Colonic mucosa (tissue), 4 donors: ENCODE measurements at regions of chr3 and their contacts with region 1.

Region 1: GRCh38 chr3:18761530-18761929 is 336.4 kb upstream of the SATB1 start:
- DNase-seq: no peak
- H3K4me3 ChIP-seq: no peak overlapping the region
- H3K27ac ChIP-seq: no peak overlapping the region
- H3K4me1 ChIP-seq: peaks cover 5% of the 10 kb centered on the region
- H3K27me3 ChIP-seq: no peaks in the 10 kb centered on the region
- CTCF ChIP-seq: no peak

Region 2: GRCh38 chr3:18559331-18559842 is 202.1 kb before region 1 on chr3:
- intact Hi-C with region 1: loop called (anchors 5 kb)
- DNase-seq: peak; percentile 42
- H3K4me3 ChIP-seq: no peak overlapping the region
- H3K27ac ChIP-seq: no peak overlapping the region
- H3K4me1 ChIP-seq: no peaks in the 10 kb centered on the region
- H3K27me3 ChIP-seq: no peaks in the 10 kb centered on the region
- CTCF ChIP-seq: peak; percentile 85

Region 3: DNA sequence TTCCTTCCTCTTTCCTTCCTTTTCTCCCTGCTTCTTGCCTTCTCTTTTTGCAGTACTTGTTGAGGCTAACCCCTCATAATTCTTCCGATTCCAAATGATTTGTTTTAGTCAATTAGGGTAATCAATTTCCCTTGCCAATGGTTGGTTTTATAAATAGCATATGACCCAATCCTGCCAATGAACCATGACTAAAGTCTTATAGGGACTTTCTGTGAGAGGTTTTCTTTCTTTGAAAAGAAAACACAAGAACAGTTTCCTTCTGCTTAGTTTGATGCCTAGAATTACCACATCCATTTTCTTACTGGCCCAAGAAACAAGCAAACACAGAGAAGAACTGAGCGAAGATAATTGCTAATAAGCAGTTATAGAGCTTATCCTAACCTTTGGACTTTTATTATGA is 43.9 kb before region 1 on chr3:
- intact Hi-C with region 1: no loop called
- DNase-seq: no peak
- H3K4me3 ChIP-seq: no peak overlapping the region
- H3K27ac ChIP-seq: no peak overlapping the region
- H3K4me1 ChIP-seq: no peaks in the 10 kb centered on the region
- H3K27me3 ChIP-seq: no peaks in the 10 kb centered on the region
- CTCF ChIP-seq: no peak